Natural killer cell (primary cell): ENCODE measurements at regions of chr15 and their contacts with region 1.

Region 1: DNA sequence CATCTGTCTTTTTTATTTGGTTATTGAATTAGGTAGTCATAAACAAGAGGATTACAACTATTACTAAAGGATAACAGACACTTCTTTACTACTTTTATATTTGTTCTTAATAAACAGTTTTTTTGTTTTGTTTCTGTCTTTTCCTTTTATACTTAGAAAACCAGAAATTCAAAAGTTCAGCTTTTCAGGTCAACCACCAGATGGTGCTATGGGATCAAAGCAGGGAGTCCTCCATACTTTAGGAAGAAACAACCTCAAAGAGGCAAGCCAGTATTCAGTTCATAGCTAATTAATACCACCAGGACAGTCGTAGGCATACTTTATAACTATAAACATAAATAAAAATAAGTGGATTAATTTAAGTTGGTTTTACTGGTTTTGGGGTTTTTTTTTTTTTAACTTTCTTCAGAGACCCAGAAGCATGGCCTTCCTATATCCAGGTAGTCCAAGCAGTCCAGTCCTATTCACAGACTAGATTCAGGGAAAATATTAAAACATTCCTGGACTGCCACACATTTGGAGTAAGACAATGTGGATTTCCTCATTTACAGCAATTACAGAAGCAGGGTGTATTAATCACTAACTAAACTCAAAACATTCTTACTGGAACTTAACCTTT is 16.0 kb upstream of the EID1 start:
- DNase-seq: peak in 1 of 2 donors; percentile 83
- ATAC-seq: peak; percentile 74 to 88 (median 81)
- H3K4me3 ChIP-seq: no peak overlapping the region
- H3K4me3 Mint-ChIP-seq: no peak overlapping the region
- H3K27ac ChIP-seq: no peak overlapping the region
- H3K27ac Mint-ChIP-seq: no peak overlapping the region
- H3K4me1 ChIP-seq: no peaks in the 10 kb centered on the region
- H3K4me1 Mint-ChIP-seq: peaks cover 0 to 5% of the 10 kb centered on the region in 2 donors
- H3K27me3 ChIP-seq: no peaks in the 10 kb centered on the region
- H3K27me3 Mint-ChIP-seq: peaks cover 15 to 23% of the 10 kb centered on the region in 2 donors
- CTCF ChIP-seq: peak; percentile 94

Region 2: DNA sequence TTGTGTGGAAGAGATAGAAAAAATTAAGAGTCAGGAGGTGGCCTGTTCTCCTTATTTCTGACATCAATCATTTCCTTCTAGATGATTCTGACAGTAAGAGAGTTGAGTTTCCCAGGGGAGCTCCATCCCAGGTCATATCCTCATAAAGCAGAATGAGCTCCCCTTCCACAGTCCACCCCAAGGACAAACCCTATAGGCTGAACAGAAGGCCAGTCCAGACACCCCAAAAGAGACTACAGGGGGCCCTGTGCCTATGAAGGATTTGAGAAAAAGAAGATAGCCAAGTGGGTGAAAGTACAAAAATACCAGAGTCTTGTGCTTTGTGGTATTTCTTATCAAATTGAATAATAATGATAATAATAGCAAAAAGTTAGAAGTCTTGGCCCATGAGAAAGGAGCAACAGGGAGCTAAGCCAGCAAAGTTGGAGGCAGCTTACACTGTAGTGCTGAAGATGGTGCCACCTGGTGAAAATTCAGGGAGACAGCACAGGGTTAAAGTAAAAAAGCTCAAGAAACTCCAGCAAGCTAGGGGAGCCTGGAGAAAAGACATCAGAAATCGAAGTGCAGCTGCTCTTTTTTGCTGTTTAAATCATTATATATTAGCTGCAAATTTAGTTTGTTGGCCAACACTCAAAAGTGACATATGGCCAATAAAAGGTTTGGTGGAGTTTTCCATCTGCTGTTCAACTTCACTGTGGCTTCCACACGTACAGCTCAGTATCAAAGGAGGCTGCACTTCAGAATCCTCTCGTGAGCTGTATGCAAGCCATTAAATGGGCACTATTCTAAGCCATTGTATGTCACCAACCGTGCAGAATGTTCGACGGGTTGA is 776.9 kb before region 1 on chr15:
- intact Hi-C with region 1: no loop called
- DNase-seq: no peak
- ATAC-seq: no peak
- H3K4me3 ChIP-seq: no peak overlapping the region
- H3K4me3 Mint-ChIP-seq: no peak overlapping the region
- H3K27ac ChIP-seq: no peak overlapping the region
- H3K27ac Mint-ChIP-seq: no peak overlapping the region
- H3K4me1 ChIP-seq: no peaks in the 10 kb centered on the region
- H3K4me1 Mint-ChIP-seq: no peaks in the 10 kb centered on the region
- H3K27me3 ChIP-seq: no peaks in the 10 kb centered on the region
- H3K27me3 Mint-ChIP-seq: peaks cover 0 to 3% of the 10 kb centered on the region in 2 donors
- CTCF ChIP-seq: no peak

Region 3: GRCh38 chr15:48898083-48898845 is 36.3 kb after region 1 on chr15:
- intact Hi-C with region 1: no loop called
- DNase-seq: no peak
- ATAC-seq: no peak
- H3K4me3 ChIP-seq: no peak overlapping the region
- H3K4me3 Mint-ChIP-seq: no peak overlapping the region
- H3K27ac ChIP-seq: no peak overlapping the region
- H3K27ac Mint-ChIP-seq: no peak overlapping the region
- H3K4me1 ChIP-seq: no peaks in the 10 kb centered on the region
- H3K4me1 Mint-ChIP-seq: peaks cover 0 to 5% of the 10 kb centered on the region in 2 donors
- H3K27me3 ChIP-seq: no peaks in the 10 kb centered on the region
- H3K27me3 Mint-ChIP-seq: peaks cover 22 to 42% of the 10 kb centered on the region in 2 donors
- CTCF ChIP-seq: no peak

Region 4: DNA sequence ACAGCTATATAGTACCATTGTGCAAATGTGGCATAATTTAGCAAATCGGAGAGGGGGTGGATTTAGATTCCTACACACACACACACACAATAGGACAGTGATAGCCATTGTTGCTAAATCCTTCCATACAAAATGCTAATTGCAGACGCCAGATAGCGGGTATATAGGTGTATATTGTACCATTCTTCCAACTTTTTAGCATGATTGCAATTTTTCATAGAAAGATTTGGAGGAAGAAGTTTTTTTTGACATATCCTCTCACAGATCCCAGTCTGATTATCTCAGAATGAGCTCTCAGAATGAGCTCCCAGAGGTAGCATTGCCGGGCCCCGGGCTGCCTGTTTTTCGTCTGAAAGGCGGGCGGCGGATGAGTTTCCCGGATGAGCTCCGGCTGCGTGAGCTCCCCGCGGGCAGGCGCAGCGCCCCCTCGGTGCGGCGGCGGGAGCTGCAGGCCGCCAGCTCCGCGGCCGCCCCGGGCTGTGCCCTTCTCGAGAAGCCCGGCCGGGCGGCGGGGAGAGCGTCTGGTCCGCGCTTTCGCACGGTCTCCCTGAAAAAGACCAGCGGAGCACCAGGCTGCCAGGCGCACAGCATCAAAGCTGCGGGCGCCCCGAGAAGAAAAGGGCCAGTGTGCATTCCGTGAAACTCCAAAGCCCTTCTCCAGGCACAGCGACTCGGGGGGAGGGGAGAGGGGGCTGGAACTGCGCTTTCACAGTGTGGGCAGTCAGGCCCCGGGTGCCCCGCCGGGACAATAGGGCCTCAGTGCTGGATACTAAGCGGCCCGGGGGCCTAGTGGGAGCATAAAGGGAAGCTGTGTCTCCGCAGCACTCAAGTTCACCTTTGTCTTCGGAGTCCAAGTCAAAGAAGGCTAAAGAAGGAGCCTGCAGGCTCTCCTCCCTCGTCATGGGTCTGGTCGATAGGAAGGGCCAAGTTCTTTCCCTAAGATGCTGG is 113.8 kb after region 1 on chr15:
- intact Hi-C with region 1: loop called (anchors 2 kb)
- DNase-seq: peak; percentile 76 to 84
- ATAC-seq: peak; percentile 97 to 100 (median 100)
- H3K4me3 ChIP-seq: peak overlapping the region; percentile 36
- H3K4me3 Mint-ChIP-seq: peak overlapping the region; percentile 76
- H3K27ac ChIP-seq: no peak overlapping the region
- H3K27ac Mint-ChIP-seq: peak overlapping the region in 1 of 2 donors; percentile 14
- H3K4me1 ChIP-seq: peaks cover 6% of the 10 kb centered on the region
- H3K4me1 Mint-ChIP-seq: peaks cover 6 to 8% of the 10 kb centered on the region in 2 donors
- H3K27me3 ChIP-seq: peaks cover 7% of the 10 kb centered on the region
- H3K27me3 Mint-ChIP-seq: peaks cover 7 to 21% of the 10 kb centered on the region in 2 donors
- CTCF ChIP-seq: peak; percentile 96

Region 5: DNA sequence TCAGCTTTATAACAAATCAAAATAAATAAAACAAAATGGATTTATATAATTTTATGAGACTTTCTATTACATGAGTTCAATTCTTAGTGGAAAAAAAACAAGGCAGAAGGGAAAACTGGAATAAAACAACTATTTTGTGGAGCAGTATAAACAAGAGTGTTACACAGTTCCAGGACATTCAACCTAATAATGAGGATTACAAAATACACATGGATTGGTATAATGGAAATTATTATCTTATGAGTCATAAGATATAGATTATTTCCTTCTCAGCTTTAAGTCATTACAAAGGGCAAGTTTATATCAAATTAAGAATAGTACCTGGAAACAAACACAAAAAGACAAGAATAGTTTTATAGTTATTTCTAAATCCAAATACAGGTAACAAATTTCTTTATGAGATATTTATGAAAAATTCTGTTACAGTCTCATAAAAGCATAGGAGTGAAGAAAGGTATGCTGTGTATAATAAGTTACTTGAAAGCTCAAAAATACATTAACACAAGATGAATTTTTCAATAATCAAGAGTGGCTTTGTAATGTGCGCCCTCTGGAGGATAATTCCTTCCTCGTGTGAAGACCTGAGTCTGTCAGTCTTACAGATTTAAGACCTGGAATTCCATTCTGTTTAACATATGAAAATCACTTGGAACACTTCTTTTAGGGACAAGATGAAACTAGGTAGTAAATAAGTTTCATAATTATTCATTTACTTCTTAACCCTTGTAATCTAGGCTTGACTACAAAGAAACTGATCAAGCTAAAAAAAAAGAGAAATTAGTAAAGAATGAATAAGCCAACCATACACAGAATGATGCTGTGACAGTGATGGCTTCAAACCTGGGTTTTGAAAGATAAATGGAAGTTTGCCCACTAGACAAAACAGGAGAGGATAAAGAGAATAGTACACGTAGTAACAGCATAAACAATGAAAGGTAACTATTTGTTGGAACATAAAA is 284.0 kb after region 1 on chr15:
- intact Hi-C with region 1: loop called (anchors 1 kb)
- DNase-seq: peak in 1 of 2 donors; percentile 65
- ATAC-seq: peak in 2 of 3 donors; percentile 53 to 56
- H3K4me3 ChIP-seq: no peak overlapping the region
- H3K4me3 Mint-ChIP-seq: no peak overlapping the region
- H3K27ac ChIP-seq: no peak overlapping the region
- H3K27ac Mint-ChIP-seq: peak overlapping the region in 1 of 2 donors; percentile 1
- H3K4me1 ChIP-seq: peaks cover 2% of the 10 kb centered on the region
- H3K4me1 Mint-ChIP-seq: peaks cover 32 to 38% of the 10 kb centered on the region in 2 donors
- H3K27me3 ChIP-seq: no peaks in the 10 kb centered on the region
- H3K27me3 Mint-ChIP-seq: no peaks in the 10 kb centered on the region
- CTCF ChIP-seq: peak; percentile 70

Region 6: GRCh38 chr15:49421991-49422390 is 560.1 kb after region 1 on chr15:
- intact Hi-C with region 1: loop called (anchors 2 kb)
- DNase-seq: peak; percentile 27 to 70
- ATAC-seq: peak; percentile 50 to 84 (median 76)
- H3K4me3 ChIP-seq: no peak overlapping the region
- H3K4me3 Mint-ChIP-seq: peak overlapping the region; percentile 82
- H3K27ac ChIP-seq: no peak overlapping the region
- H3K27ac Mint-ChIP-seq: peak overlapping the region; percentile 86 to 90
- H3K4me1 ChIP-seq: no peaks in the 10 kb centered on the region
- H3K4me1 Mint-ChIP-seq: peaks cover 6 to 7% of the 10 kb centered on the region in 2 donors
- H3K27me3 ChIP-seq: no peaks in the 10 kb centered on the region
- H3K27me3 Mint-ChIP-seq: peaks cover 6 to 20% of the 10 kb centered on the region in 2 donors
- CTCF ChIP-seq: peak; percentile 82

Region 7: DNA sequence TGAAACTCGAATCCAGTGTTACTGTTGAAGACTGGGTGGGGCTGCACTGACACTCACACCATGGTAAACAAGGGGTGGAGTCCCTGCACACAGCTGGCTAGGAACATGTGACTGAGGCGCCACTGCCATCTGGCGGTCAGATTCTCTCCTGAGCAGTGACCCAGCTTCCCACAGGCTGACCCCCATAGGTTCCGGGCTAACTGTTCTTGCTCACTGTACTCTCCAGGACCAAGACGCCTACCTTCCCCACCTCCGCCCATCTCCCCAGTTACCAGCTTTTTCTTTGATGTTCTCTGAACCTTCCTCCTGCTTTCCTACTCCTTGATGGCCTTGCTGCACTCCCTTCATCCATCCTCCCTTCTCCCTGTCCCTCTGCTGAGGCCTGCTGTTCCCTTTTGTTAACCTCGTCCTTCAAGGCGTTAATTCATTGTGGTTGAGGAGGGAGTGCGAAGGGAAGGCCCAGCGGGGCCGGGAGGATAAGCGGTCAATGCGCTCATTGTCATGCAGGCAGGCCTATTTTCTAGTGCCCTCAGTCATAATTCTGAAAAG is 1141.9 kb after region 1 on chr15:
- intact Hi-C with region 1: loop called (anchors 1 kb)
- DNase-seq: peak; percentile 74 to 79
- ATAC-seq: peak; percentile 97 to 99 (median 99)
- H3K4me3 ChIP-seq: no peak overlapping the region
- H3K4me3 Mint-ChIP-seq: peak overlapping the region; percentile 75
- H3K27ac ChIP-seq: peak overlapping the region; percentile 66
- H3K27ac Mint-ChIP-seq: peak overlapping the region; percentile 88 to 95
- H3K4me1 ChIP-seq: peaks cover 13% of the 10 kb centered on the region
- H3K4me1 Mint-ChIP-seq: peaks cover 25 to 30% of the 10 kb centered on the region in 2 donors
- H3K27me3 ChIP-seq: no peaks in the 10 kb centered on the region
- H3K27me3 Mint-ChIP-seq: no peaks in the 10 kb centered on the region
- CTCF ChIP-seq: peak; percentile 73

Region 8: GRCh38 chr15:50145451-50145872 is 1283.5 kb after region 1 on chr15:
- intact Hi-C with region 1: loop called (anchors 1 kb)
- DNase-seq: peak in 1 of 2 donors; percentile 71
- ATAC-seq: peak; percentile 56 to 67 (median 62)
- H3K4me3 ChIP-seq: no peak overlapping the region
- H3K4me3 Mint-ChIP-seq: no peak overlapping the region
- H3K27ac ChIP-seq: no peak overlapping the region
- H3K27ac Mint-ChIP-seq: no peak overlapping the region
- H3K4me1 ChIP-seq: no peaks in the 10 kb centered on the region
- H3K4me1 Mint-ChIP-seq: peaks cover 0 to 5% of the 10 kb centered on the region in 2 donors
- H3K27me3 ChIP-seq: no peaks in the 10 kb centered on the region
- H3K27me3 Mint-ChIP-seq: no peaks in the 10 kb centered on the region
- CTCF ChIP-seq: peak; percentile 81